ENCODE measurements at regions of chr1 and their contacts with region 1.

Region 1: GRCh38 chr1:62175568-62176179 is 19.0 kb upstream of the L1TD1 start:
- DNase-seq: peak; percentile 41
- ATAC-seq: no peak
- H3K4me3 ChIP-seq: no peak overlapping the region
- H3K4me3 Mint-ChIP-seq: no peak overlapping the region
- H3K27ac ChIP-seq: no peak overlapping the region
- H3K27ac Mint-ChIP-seq: no peak overlapping the region
- H3K4me1 ChIP-seq: no peaks in the 10 kb centered on the region
- H3K4me1 Mint-ChIP-seq: no peaks in the 10 kb centered on the region
- H3K27me3 ChIP-seq: no peaks in the 10 kb centered on the region
- H3K27me3 Mint-ChIP-seq: peaks cover 8% of the 10 kb centered on the region
- CTCF ChIP-seq: peak; percentile 74

Region 2: GRCh38 chr1:61654082-61654481 is 521.6 kb before region 1 on chr1:
- CTCF ChIA-PET with region 1: no interaction called
- POLR2A ChIA-PET with region 1: no interaction called
- intact Hi-C with region 1: no loop called
- DNase-seq: no peak
- ATAC-seq: no peak
- H3K4me3 ChIP-seq: no peak overlapping the region
- H3K4me3 Mint-ChIP-seq: no peak overlapping the region
- H3K27ac ChIP-seq: no peak overlapping the region
- H3K27ac Mint-ChIP-seq: no peak overlapping the region
- H3K4me1 ChIP-seq: no peaks in the 10 kb centered on the region
- H3K4me1 Mint-ChIP-seq: no peaks in the 10 kb centered on the region
- H3K27me3 ChIP-seq: no peaks in the 10 kb centered on the region
- H3K27me3 Mint-ChIP-seq: no peaks in the 10 kb centered on the region
- CTCF ChIP-seq: no peak

Region 3: DNA sequence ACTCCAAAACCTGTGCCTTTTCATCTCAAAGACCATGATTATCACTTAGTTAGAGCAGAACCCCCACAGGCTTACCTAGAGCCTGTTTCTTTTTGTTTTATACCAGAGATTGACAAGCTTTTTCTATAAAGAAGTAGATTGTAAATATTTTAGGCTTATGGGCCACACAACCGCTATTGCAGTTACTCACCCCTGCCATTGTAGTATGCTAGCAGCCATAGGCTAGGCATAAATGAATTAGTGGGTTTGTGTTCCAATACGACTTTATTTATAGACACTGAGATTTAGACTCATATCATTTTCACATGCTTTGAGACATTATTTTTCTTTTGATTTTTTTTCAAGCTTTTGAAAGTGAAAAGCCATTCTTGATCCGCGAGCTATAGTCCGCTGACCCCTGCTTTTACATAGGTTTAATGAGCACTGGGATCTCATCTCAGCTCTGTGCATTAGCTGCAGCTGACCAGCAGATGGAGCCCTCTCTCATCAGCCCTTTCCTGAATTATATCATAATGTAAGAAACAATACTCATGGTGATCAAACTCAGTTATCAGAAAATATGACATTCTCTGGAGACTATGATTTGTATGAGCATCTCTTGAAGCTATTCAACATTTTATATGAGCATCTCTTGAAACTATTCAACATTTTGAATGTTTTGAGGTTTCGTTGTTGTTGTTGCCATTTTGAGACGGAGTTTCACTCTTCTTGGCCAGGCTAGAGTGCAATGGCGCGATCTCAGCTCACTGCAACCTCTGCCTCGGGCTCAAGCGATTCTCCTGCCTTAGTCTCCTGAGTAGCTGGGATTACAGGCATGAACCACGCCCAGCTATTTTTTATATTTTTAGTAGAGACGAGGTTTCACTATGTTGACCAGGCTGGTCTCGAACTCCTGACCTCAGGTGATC is 93.0 kb before region 1 on chr1:
- CTCF ChIA-PET with region 1: no interaction called
- POLR2A ChIA-PET with region 1: no interaction called
- intact Hi-C with region 1: no loop called
- DNase-seq: peak; percentile 38
- ATAC-seq: peak; percentile 45
- H3K4me3 ChIP-seq: no peak overlapping the region
- H3K4me3 Mint-ChIP-seq: no peak overlapping the region
- H3K27ac ChIP-seq: no peak overlapping the region
- H3K27ac Mint-ChIP-seq: no peak overlapping the region
- H3K4me1 ChIP-seq: no peaks in the 10 kb centered on the region
- H3K4me1 Mint-ChIP-seq: no peaks in the 10 kb centered on the region
- H3K27me3 ChIP-seq: no peaks in the 10 kb centered on the region
- H3K27me3 Mint-ChIP-seq: no peaks in the 10 kb centered on the region
- CTCF ChIP-seq: peak; percentile 95

Region 4: DNA sequence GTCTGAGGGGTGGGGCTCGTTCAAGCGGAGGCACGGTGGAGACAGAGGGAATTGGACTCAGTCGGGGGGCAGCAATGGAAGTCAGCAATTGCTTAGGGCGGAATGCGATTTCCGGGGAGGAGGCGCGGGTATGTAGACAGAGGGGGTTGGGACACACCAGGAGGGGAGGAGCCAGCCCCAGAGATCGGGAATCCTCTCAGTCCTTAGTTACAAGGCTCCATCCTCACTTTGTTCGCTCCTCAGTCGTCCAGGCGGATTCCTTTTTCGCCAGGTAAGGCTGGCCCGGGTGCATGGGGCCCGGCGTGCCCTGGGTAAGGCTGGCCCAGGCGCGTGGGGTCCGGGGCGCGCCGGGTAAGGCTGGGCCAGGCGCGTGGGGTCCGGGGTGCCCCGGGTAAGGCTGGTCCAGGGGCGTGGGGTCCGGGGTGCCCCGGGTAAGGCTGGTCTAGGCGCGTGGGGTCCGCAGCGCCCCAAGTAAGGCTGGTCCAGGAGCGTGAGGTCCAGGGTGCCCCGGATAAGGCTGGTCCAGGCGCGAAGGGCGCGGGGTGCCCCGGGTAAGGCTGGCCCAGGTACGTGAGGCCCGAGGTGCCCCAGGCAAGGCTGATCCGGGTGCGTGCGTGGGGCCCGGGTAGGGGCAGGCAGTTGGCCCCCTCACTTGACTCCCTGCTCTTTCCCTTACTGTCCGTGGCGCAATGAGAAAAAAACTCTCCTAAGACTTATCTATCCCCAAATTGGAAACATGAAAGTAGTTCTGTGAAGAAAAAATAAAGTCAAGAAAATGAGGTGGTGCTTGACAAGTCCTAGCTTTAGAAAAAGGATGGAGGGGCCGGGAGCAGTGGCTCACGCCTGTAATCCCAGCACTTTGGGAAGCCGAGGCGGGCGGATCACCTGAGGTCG is 19.2 kb after region 1 on chr1 and contains the start of gene L1TD1:
- CTCF ChIA-PET with region 1: no interaction called
- POLR2A ChIA-PET with region 1: no interaction called
- intact Hi-C with region 1: no loop called
- DNase-seq: no peak
- ATAC-seq: no peak
- H3K4me3 ChIP-seq: peak within 1 kb of the TSS in 2 of 5 experiments; percentile 18 to 31
- H3K4me3 Mint-ChIP-seq: no peak within 1 kb of the TSS
- H3K27ac ChIP-seq: no peak within 1 kb of the TSS
- H3K27ac Mint-ChIP-seq: no peak within 1 kb of the TSS
- H3K4me1 ChIP-seq: no peaks in the 10 kb centered on the region
- H3K4me1 Mint-ChIP-seq: no peaks in the 10 kb centered on the region
- H3K27me3 ChIP-seq: peaks cover 0 to 15% (median 2%) of the 10 kb centered on the region in 4 experiments
- H3K27me3 Mint-ChIP-seq: peaks cover 28% of the 10 kb centered on the region
- CTCF ChIP-seq: no peak
- total RNA-seq, gene L1TD1: 0.15 TPM in 1 of 2 replicates, not detected in the other

Region 5: DNA sequence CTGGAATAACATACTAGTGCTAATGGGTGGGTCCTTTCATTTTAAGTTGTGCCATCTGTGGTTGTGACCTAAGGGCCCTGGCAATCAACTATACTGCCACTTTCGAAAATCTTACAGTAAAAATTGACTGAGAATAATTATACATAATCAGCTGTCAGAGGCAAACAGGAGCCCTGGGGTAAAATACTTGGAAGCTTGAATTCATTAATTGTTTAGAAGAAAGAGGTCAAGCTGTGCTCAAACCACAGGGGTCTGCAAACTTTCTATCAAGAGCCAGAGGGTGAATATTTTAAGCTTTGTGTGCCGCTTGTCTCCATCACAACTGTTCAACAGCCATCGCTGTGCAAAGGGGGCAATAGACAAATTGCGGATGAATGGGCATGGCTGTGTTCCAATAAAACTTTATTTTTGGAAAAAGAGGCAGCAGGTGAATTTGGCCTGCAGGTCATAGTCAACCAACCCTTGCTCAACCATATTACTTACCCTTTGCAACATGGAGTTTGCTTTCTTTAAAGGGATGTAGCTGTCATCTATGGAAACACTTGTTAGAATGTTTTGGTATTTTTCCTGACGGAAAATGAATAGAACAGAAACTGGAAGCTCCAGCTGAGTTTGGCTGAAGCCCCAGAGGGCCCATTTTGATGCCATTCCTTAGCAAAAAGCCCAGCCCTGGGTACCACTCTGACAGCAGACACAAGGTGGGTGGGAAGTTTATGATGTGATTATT is 225.5 kb after region 1 on chr1:
- CTCF ChIA-PET with region 1: interaction called, 11 read pairs
- POLR2A ChIA-PET with region 1: no interaction called
- intact Hi-C with region 1: no loop called
- DNase-seq: no peak
- ATAC-seq: no peak
- H3K4me3 ChIP-seq: no peak overlapping the region
- H3K4me3 Mint-ChIP-seq: no peak overlapping the region
- H3K27ac ChIP-seq: no peak overlapping the region
- H3K27ac Mint-ChIP-seq: no peak overlapping the region
- H3K4me1 ChIP-seq: no peaks in the 10 kb centered on the region
- H3K4me1 Mint-ChIP-seq: no peaks in the 10 kb centered on the region
- H3K27me3 ChIP-seq: no peaks in the 10 kb centered on the region
- H3K27me3 Mint-ChIP-seq: no peaks in the 10 kb centered on the region
- CTCF ChIP-seq: no peak

Region 6: GRCh38 chr1:62407405-62408009 is 231.8 kb after region 1 on chr1:
- CTCF ChIA-PET with region 1: interaction called, 11 read pairs
- POLR2A ChIA-PET with region 1: no interaction called
- intact Hi-C with region 1: loop called (anchors 1 kb)
- DNase-seq: peak; percentile 52
- ATAC-seq: no peak
- H3K4me3 ChIP-seq: no peak overlapping the region
- H3K4me3 Mint-ChIP-seq: no peak overlapping the region
- H3K27ac ChIP-seq: no peak overlapping the region
- H3K27ac Mint-ChIP-seq: no peak overlapping the region
- H3K4me1 ChIP-seq: no peaks in the 10 kb centered on the region
- H3K4me1 Mint-ChIP-seq: no peaks in the 10 kb centered on the region
- H3K27me3 ChIP-seq: no peaks in the 10 kb centered on the region
- H3K27me3 Mint-ChIP-seq: no peaks in the 10 kb centered on the region
- CTCF ChIP-seq: peak; percentile 86